ENCODE measurements at regions of chr15 and their contacts with region 1.

Region 1: GRCh38 chr15:63833021-63833696 is 589 bp downstream of the HERC1 start:
- DNase-seq: no peak
- H3K4me3 ChIP-seq: peak overlapping the region; percentile 61 to 93 (median 90)
- H3K27ac ChIP-seq: peak overlapping the region; percentile 94
- H3K4me1 ChIP-seq: peaks cover 35% of the 10 kb centered on the region
- H3K27me3 ChIP-seq: no peaks in the 10 kb centered on the region
- CTCF ChIP-seq: no peak
- POLR2A ChIP-seq: no peak

Region 2: DNA sequence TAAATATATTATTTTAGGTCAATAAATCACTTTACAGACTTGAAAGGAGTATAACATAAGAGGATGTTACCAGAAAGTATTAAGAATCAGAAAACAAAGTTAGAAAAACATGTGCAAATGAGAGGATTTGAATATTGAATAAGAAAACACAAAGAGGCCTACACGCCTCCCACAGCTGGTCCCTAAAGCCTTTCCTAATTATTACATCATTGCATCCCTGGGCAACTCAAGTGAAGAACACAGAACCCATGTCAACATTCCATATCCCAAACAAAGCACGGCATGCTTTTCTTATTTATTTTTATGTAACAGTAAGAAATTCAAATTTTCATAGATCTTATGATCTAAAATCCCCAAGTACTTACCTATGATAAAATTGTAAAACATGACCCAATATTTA is 60.6 kb before region 1 on chr15:
- CTCF ChIA-PET with region 1: no interaction called
- POLR2A ChIA-PET with region 1: no interaction called
- dilution Hi-C with region 1: no loop called
- intact Hi-C with region 1: no loop called
- DNase-seq: no peak
- H3K4me3 ChIP-seq: no peak overlapping the region
- H3K27ac ChIP-seq: no peak overlapping the region
- H3K4me1 ChIP-seq: no peaks in the 10 kb centered on the region
- H3K27me3 ChIP-seq: no peaks in the 10 kb centered on the region
- CTCF ChIP-seq: no peak
- POLR2A ChIP-seq: no peak

Region 3: DNA sequence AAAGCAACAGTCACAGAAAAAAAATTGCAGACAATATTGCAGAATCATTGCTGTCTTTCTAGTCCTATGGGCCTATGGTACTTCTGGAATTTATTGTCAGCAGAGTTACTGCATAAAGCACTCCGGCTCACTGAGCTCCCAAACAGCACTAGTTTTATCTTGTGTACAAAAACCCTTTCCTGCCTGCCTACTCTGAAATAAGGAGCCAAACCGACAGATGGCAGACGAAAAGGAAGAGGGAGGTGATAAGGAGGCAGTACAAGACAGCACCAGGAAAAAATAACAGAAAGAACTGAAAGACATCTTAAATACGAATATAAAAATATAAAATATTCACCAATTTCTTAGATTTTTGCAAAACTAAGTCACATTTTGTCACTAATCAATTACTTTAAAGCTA is 15.0 kb before region 1 on chr15:
- CTCF ChIA-PET with region 1: interaction called, 10 read pairs
- POLR2A ChIA-PET with region 1: no interaction called
- dilution Hi-C with region 1: no loop called
- intact Hi-C with region 1: no loop called
- DNase-seq: peak; percentile 87
- H3K4me3 ChIP-seq: no peak overlapping the region
- H3K27ac ChIP-seq: no peak overlapping the region
- H3K4me1 ChIP-seq: peaks cover 13% of the 10 kb centered on the region
- H3K27me3 ChIP-seq: no peaks in the 10 kb centered on the region
- CTCF ChIP-seq: peak; percentile 7 to 11
- POLR2A ChIP-seq: no peak

Region 4: DNA sequence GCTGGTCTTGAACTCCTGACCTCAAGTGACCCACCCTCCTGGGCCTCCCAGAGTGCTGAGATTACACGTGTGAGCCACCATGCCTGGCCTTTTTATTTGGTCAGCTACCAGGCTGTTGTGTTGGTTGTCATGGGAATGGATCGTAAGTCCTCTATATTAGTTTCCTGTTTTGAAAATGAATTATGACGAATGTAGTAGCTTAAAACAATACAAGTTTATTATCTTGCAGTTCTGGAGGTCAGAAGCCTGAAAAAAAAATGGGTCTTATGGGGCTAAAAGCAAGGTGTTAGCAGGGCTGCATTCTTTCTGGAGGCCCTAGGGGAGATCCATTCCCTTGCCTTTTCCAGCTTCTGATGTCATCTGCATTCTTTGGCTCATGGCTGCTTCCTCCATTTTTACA is 25.7 kb after region 1 on chr15:
- CTCF ChIA-PET with region 1: interaction called, 20 read pairs
- POLR2A ChIA-PET with region 1: no interaction called
- dilution Hi-C with region 1: no loop called
- intact Hi-C with region 1: loop called (anchors 1 kb)
- DNase-seq: peak; percentile 95
- H3K4me3 ChIP-seq: no peak overlapping the region
- H3K27ac ChIP-seq: peak overlapping the region; percentile 90
- H3K4me1 ChIP-seq: peaks cover 28% of the 10 kb centered on the region
- H3K27me3 ChIP-seq: no peaks in the 10 kb centered on the region
- CTCF ChIP-seq: no peak
- POLR2A ChIP-seq: no peak

Measured in endothelial cell of umbilical vein (primary cell).